Activated naive CD4-positive, alpha-beta T cell treated with anti-CD3 and anti-CD28 coated beads for 36 hours (primary cell): ENCODE measurements at regions of chr9 and their contacts with region 1.

Region 1: DNA sequence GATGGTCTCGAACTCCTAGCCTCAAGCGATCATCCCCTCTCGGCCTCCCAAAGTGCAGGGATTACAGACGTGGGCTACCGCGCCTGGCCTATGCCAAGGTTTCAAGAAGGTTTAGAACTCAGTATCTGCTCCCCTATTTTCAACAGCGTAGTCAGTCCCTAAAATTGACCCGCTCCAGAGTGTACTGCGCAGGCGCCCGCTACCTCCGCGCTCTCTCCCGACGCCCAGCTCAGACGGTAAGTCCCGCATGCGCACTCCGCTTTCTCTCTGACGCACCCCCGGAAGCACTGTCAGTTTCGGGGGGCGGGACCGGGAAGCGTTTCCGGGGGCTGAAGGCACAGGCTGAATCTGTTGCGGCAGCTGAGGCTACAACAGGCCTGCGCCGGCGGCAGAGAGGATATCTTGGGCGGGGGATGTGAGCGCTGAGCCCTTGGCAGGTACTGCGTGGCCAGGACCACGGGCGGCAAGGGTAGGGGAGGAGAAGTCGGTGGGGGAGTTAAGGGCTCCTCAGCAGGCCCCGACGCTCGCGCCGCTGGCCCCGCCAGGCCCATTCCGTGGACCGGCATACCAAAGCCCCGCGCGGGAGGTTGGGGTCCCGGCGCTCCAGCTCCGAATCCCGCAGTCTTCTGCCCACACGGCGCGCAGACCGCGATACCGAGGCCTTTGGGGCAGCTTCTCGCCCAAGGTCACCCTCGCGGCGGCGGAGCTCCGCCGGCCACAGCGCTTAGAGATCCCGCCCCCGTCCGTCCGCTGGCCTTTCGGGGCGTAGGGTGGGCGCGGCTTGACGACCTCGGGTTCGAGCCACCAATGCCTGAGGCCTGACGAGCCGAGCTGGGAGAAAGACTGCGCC is at the start of gene ZBTB43:
- DNase-seq: peak; percentile 99
- H3K4me3 Mint-ChIP-seq: peak within 1 kb of the TSS; percentile 89
- H3K27ac Mint-ChIP-seq: peak within 1 kb of the TSS; percentile 95
- H3K4me1 Mint-ChIP-seq: peaks cover 30% of the 10 kb centered on the region
- H3K27me3 Mint-ChIP-seq: no peaks in the 10 kb centered on the region
- total RNA-seq, gene ZBTB43: 20.9 to 25.9 TPM

Region 2: DNA sequence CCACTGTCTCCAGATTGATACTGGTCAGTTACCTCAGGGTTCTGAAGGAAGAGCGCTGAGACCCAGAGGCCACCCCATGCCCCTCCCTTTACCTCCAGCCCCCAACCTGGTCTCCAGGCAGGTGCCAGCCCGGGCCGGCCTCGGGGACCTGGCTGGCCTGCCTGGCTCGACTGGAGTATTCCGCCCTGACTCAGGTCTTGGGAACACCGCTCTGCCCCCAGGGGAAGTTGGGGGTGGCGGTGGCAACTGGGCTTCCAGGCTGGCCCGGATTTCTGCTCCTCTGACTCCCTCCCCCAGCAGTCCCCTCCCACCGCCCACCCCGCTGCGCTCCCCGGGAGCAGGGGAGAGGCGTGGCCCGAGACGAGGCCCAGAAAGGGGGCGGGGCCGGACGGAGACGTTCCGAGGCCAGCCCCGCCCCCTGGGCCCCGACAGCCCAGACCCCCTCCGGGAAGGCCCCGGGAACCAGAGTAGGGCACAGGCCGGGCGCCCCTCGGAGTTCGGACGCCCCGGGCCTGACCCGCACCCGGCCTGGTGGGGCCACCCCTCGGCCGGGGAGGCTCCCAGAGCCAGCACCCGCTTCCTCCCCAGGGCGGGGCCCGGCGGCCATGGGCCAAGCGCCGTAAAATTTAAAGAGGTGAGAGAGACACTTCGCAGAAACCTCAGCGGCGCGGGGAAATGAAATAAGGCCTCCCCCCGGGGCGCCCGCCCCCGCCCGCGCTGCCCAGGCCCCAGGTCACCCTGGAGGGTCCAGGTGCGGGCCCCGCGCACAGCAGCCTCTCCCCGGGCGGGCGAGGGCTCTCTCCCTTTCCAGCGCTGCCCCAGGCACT is 82.5 kb before region 1 on chr9:
- CTCF ChIA-PET with region 1: no interaction called
- intact Hi-C with region 1: loop called (anchors 1 kb)
- DNase-seq: peak; percentile 93
- H3K4me3 Mint-ChIP-seq: peak overlapping the region; percentile 84
- H3K27ac Mint-ChIP-seq: peak overlapping the region; percentile 82
- H3K4me1 Mint-ChIP-seq: peaks cover 35% of the 10 kb centered on the region
- H3K27me3 Mint-ChIP-seq: no peaks in the 10 kb centered on the region

Region 3: GRCh38 chr9:126745574-126746411 is 59.1 kb before region 1 on chr9:
- CTCF ChIA-PET with region 1: no interaction called
- intact Hi-C with region 1: loop called (anchors 2 kb)
- DNase-seq: peak; percentile 45
- H3K4me3 Mint-ChIP-seq: no peak overlapping the region
- H3K27ac Mint-ChIP-seq: peak overlapping the region; percentile 28
- H3K4me1 Mint-ChIP-seq: peaks cover 29% of the 10 kb centered on the region
- H3K27me3 Mint-ChIP-seq: no peaks in the 10 kb centered on the region

Region 4: GRCh38 chr9:126819482-126819881 is 14.6 kb after region 1 on chr9:
- CTCF ChIA-PET with region 1: interaction called, 5 read pairs
- intact Hi-C with region 1: loop called (anchors 1 kb)
- DNase-seq: no peak
- H3K4me3 Mint-ChIP-seq: no peak overlapping the region
- H3K27ac Mint-ChIP-seq: peak overlapping the region; percentile 72
- H3K4me1 Mint-ChIP-seq: peaks cover 36% of the 10 kb centered on the region
- H3K27me3 Mint-ChIP-seq: no peaks in the 10 kb centered on the region

Region 5: DNA sequence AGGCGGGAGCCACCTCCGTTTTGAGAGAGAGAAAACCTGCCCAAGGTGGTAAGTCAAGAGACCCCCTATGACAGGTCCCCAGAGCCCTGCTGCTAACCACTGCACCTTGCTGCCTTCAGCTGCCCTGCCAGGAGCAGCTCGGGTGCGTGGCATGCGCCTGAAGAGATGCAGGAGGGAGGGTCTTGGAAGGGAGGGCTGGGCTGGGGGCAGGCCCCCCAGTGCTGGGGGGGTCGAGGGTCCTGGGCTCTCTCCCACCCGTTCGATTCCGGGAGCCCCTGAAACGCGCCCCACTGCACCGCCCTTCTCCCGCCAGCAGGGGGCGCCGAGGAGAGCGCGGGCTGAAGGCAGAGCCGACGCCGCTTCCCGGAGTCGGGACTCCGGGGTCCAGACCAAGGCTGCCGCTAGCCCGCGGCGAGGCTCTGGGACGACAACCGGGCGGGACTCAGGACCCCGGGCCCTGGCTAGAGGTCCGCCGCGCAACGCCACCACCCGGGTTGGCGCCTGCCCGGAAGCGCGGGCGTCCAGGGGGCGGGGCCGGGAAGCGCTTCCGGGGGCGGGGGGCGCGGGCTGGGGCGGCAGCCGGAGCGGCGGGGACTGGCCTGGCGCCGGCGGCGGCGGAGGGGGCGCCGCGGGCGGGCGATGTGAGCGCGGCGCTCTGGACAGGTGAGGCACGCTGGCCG is 55.3 kb after region 1 on chr9 and contains the start of gene ZBTB34:
- CTCF ChIA-PET with region 1: interaction called, 3 read pairs
- intact Hi-C with region 1: loop called (anchors 2 kb)
- DNase-seq: peak; percentile 70
- H3K4me3 Mint-ChIP-seq: peak within 1 kb of the TSS; percentile 81
- H3K27ac Mint-ChIP-seq: peak within 1 kb of the TSS; percentile 77
- H3K4me1 Mint-ChIP-seq: peaks cover 20% of the 10 kb centered on the region
- H3K27me3 Mint-ChIP-seq: no peaks in the 10 kb centered on the region
- total RNA-seq, gene ZBTB34: 4.2 to 4.6 TPM

Region 6: GRCh38 chr9:126914458-126915280 is 109.7 kb after region 1 on chr9 and contains the start of gene RALGPS1:
- CTCF ChIA-PET with region 1: no interaction called
- intact Hi-C with region 1: loop called (anchors 10 kb)
- DNase-seq: peak; percentile 93
- H3K4me3 Mint-ChIP-seq: peak within 1 kb of the TSS; percentile 71
- H3K27ac Mint-ChIP-seq: no peak within 1 kb of the TSS
- H3K4me1 Mint-ChIP-seq: peaks cover 8% of the 10 kb centered on the region
- H3K27me3 Mint-ChIP-seq: peaks cover 2% of the 10 kb centered on the region
- total RNA-seq, gene RALGPS1: 2.1 to 2.4 TPM